Prostate gland (tissue), 2 donors: ENCODE measurements at regions of chr12 and their contacts with region 1.

Region 1: DNA sequence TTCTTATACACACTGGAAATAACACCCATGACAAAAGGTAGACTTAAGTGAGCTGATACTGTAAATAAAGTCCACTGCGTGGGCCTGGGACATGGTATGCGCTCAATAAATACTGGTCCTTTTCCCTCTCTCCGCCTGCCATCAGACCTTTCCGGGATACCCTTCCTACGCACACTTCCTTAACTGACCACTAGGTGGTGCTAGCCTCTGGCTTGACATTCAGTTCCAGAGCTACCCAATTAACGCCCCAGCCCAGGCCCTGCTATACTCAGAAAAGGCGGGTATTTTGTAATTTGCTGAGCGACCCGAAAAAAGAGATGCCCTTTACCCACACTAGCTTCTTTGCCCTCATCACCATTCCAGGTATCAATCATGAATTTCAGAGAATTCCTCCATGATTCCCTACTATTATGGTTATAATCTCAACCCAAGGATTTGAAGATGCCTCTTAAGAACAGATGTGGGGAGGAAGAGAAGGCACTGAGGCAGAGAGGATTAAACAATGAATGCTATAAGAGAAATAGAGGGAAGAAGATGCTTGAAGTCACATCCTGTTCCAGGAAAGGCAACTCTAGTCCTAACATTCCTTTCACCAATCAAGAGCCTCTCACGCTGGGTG is 3.9 kb upstream of the LRP1 start:
- DNase-seq: peak; percentile 67
- H3K4me3 ChIP-seq: no peak overlapping the region
- H3K27ac ChIP-seq: no peak overlapping the region
- H3K4me1 ChIP-seq: no peaks in the 10 kb centered on the region
- H3K27me3 ChIP-seq: no peaks in the 10 kb centered on the region
- CTCF ChIP-seq: peak; percentile 93 to 96 (median 96)
- POLR2A ChIP-seq: no peak

Region 2: GRCh38 chr12:56271031-56271430 is 853.3 kb before region 1 on chr12:
- intact Hi-C with region 1: no loop called
- DNase-seq: no peak
- H3K4me3 ChIP-seq: no peak overlapping the region
- H3K27ac ChIP-seq: no peak overlapping the region
- H3K4me1 ChIP-seq: peaks cover 4% of the 10 kb centered on the region
- H3K27me3 ChIP-seq: no peaks in the 10 kb centered on the region
- CTCF ChIP-seq: peak in 1 of 4 experiments; percentile 16
- POLR2A ChIP-seq: no peak

Region 3: DNA sequence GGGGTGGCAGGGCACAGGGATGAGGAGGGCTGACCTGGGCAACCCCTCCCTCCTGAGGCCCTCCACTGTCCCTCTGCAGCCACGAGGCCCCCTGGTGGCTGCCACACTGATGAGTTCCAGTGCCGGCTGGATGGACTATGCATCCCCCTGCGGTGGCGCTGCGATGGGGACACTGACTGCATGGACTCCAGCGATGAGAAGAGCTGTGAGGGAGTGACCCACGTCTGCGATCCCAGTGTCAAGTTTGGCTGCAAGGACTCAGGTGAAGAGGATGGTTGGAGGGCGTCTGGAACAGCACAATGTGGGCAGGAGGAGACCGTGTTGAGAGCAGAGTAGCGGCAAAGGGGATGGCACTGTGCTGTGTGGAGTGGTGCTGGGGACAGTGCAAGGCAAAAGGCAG is 48.7 kb after region 1 on chr12:
- intact Hi-C with region 1: loop called (anchors 2 kb)
- DNase-seq: no peak
- H3K4me3 ChIP-seq: no peak overlapping the region
- H3K27ac ChIP-seq: no peak overlapping the region
- H3K4me1 ChIP-seq: peaks cover 3% of the 10 kb centered on the region
- H3K27me3 ChIP-seq: no peaks in the 10 kb centered on the region
- CTCF ChIP-seq: peak in 2 of 4 experiments; percentile 22 to 50
- POLR2A ChIP-seq: no peak

Region 4: DNA sequence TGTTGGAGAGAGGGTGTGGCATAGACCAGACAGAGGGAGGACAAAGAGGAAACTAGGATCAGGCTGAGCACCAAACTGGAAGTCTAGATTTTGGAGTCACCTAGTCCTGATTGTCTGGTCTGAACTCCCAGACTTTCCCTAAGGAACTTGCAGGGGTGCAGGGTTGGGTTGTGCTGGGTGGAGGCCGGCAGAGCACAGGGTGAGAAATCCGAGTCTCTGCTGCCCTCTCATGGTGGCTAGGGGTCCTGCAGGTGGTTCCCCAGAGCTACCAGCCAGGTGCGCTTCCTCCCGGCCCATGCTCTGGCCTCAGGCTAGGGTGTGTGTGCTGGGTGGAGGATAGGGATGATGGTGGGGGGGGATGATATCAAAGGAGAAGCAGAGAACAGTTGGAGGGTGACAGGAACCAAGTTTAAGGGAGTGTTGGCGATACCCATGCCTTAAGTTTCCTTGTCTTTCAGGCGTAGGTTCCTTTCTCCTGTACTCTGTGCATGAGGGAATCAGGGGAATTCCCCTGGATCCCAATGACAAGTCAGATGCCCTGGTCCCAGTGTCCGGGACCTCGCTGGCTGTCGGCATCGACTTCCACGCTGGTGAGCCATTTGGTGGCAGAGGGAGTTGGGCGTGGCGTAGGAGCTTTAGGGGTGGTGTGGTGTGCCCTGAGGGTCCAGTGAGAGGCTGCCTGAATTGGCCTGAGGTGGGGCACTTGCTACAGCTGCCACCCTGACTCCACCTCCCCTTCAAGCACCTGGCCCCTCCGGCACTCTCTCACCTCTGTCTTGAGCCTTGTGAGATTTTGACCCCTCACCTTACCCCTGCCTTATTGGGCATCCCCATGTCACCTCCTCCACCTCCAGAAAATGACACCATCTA is 58.8 kb after region 1 on chr12:
- intact Hi-C with region 1: loop called (anchors 2 kb)
- DNase-seq: peak; percentile 79
- H3K4me3 ChIP-seq: no peak overlapping the region
- H3K27ac ChIP-seq: no peak overlapping the region
- H3K4me1 ChIP-seq: no peaks in the 10 kb centered on the region
- H3K27me3 ChIP-seq: no peaks in the 10 kb centered on the region
- CTCF ChIP-seq: peak; percentile 78 to 95 (median 90)
- POLR2A ChIP-seq: no peak